Activated CD4-positive, alpha-beta T cell treated with anti-CD3 and anti-CD28 coated beads for 36 hours (primary cell): ENCODE measurements at regions of chr15 and their contacts with region 1.

Region 1: GRCh38 chr15:63402498-63403253 is 21.0 kb upstream of the CA12 start:
- DNase-seq: no peak
- ATAC-seq: peak; percentile 57
- H3K4me3 Mint-ChIP-seq: no peak overlapping the region
- H3K27ac Mint-ChIP-seq: no peak overlapping the region
- H3K4me1 Mint-ChIP-seq: peaks cover 17% of the 10 kb centered on the region
- H3K27me3 Mint-ChIP-seq: peaks cover 6% of the 10 kb centered on the region

Region 2: GRCh38 chr15:62900071-62900802 is 502.4 kb before region 1 on chr15:
- CTCF ChIA-PET with region 1: no interaction called
- POLR2A ChIA-PET with region 1: no interaction called
- intact Hi-C with region 1: loop called (anchors 2 to 5 kb)
- DNase-seq: no peak
- ATAC-seq: no peak
- H3K4me3 Mint-ChIP-seq: no peak overlapping the region
- H3K27ac Mint-ChIP-seq: no peak overlapping the region
- H3K4me1 Mint-ChIP-seq: no peaks in the 10 kb centered on the region
- H3K27me3 Mint-ChIP-seq: peaks cover 8% of the 10 kb centered on the region

Region 3: DNA sequence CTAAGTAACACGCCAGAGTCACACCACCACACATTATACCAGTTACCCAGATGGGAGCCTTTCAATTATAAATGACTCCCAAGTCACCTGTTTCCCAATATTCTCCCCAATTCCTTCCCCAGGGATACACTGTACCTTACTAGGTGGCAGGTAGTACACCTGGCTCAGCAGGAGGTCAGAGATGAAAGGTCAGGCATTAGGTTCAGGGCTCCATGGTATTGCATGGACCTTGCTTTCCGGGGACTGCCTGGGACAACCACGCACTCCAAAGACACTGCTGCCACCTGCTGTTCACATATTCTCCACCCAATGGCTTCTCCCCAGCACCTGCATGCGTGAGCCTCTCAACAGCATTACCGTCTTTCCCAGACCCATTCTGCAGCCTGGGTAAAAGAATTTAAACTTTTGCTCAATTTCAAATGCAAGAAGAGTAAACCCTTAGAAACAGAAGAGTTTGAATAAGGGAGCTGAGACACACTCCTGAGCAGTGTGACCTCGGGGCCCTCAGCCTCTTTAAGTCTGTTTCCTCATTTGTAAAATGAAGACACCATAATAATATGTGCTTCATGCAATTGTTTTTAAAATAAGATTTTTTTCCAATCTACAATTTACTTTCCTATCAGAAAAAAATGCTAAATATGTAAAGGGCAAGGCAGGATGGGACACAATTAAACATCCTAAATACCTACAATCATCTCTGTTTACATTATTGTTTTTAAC is 309.0 kb before region 1 on chr15:
- CTCF ChIA-PET with region 1: no interaction called
- POLR2A ChIA-PET with region 1: no interaction called
- intact Hi-C with region 1: loop called in 1 of 2 experiments (anchors 5 kb)
- DNase-seq: peak; percentile 87
- ATAC-seq: peak; percentile 94
- H3K4me3 Mint-ChIP-seq: no peak overlapping the region
- H3K27ac Mint-ChIP-seq: no peak overlapping the region
- H3K4me1 Mint-ChIP-seq: peaks cover 4% of the 10 kb centered on the region
- H3K27me3 Mint-ChIP-seq: no peaks in the 10 kb centered on the region

Region 4: GRCh38 chr15:63122002-63122893 is 280.4 kb before region 1 on chr15:
- CTCF ChIA-PET with region 1: no interaction called
- POLR2A ChIA-PET with region 1: no interaction called
- intact Hi-C with region 1: loop called in 1 of 2 experiments (anchors 5 kb)
- DNase-seq: peak; percentile 91
- ATAC-seq: peak; percentile 89
- H3K4me3 Mint-ChIP-seq: peak overlapping the region; percentile 92
- H3K27ac Mint-ChIP-seq: peak overlapping the region; percentile 88
- H3K4me1 Mint-ChIP-seq: peaks cover 12% of the 10 kb centered on the region
- H3K27me3 Mint-ChIP-seq: no peaks in the 10 kb centered on the region

Region 5: GRCh38 chr15:63166219-63166618 is 236.5 kb before region 1 on chr15:
- CTCF ChIA-PET with region 1: interaction called, 3 read pairs
- POLR2A ChIA-PET with region 1: no interaction called
- intact Hi-C with region 1: loop called in 1 of 2 experiments (anchors 5 kb)
- DNase-seq: no peak
- ATAC-seq: no peak
- H3K4me3 Mint-ChIP-seq: no peak overlapping the region
- H3K27ac Mint-ChIP-seq: no peak overlapping the region
- H3K4me1 Mint-ChIP-seq: peaks cover 4% of the 10 kb centered on the region
- H3K27me3 Mint-ChIP-seq: no peaks in the 10 kb centered on the region

Region 6: DNA sequence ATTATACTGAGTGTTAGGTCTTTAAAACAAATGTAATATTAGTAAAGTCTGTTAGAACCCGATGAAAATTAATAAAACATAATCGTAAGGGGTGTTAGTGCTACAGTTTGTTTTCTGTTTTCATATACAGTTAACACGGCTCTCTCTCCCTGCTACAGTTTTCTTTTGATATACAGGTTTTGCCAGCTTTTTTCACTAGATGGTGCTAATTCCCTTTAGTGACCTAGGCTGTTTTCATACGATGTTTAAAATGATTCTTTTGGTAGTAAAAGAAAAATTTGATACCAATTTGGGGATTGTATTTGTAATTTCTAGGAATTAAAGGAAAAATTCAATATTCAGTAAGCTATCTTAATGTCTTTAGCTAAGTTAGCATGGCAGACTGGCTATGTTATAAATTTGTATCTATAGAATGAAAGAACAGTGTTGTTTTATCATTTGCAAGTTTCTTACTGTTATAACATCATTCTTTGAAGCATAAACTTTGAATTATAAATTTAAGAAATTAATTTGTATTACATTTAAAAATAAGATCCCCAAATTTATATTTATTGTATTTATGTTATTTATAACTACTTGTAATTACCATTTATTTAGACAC is 113.8 kb before region 1 on chr15:
- CTCF ChIA-PET with region 1: interaction called, 33 read pairs
- POLR2A ChIA-PET with region 1: interaction called, 3 read pairs
- intact Hi-C with region 1: loop called (anchors 1 kb)
- DNase-seq: no peak
- ATAC-seq: peak; percentile 81
- H3K4me3 Mint-ChIP-seq: no peak overlapping the region
- H3K27ac Mint-ChIP-seq: no peak overlapping the region
- H3K4me1 Mint-ChIP-seq: peaks cover 8% of the 10 kb centered on the region
- H3K27me3 Mint-ChIP-seq: no peaks in the 10 kb centered on the region